ENCODE measurements at regions of chr7 and their contacts with region 1.

Region 1: GRCh38 chr7:77903597-77903996 is 105.0 kb downstream of the PHTF2 start:
- DNase-seq: no peak
- H3K4me3 ChIP-seq: no peak overlapping the region
- H3K27ac ChIP-seq: no peak overlapping the region
- H3K4me1 ChIP-seq: no peaks in the 10 kb centered on the region
- H3K27me3 ChIP-seq: no peaks in the 10 kb centered on the region
- CTCF ChIP-seq: no peak
- POLR2A ChIP-seq: no peak

Region 2: DNA sequence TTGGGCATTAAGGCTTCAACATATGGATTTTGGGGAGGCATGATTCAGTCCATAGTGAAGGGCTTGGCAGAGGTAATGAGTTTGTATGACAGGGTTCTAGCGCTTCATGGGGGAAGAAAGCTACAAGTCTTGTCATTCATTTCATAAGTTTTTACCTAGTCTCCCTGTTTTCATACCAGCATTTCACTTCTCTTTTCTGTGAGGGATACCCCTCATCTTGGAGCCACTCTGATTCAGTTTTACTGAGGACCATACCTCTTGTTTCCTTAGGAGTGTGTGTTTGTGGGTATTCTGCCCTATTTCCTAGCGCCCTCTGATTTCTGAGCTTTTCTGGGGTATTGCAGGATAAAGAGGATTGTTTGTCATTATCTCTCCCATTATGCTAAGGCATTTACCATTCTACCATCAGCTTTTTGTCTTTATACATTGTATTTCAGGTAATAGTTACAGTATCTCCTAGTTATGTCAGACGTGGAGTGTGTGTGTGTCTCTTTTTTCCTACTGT is 200.6 kb before region 1 on chr7:
- CTCF ChIA-PET with region 1: no interaction called
- POLR2A ChIA-PET with region 1: interaction called, 14 read pairs
- dilution Hi-C with region 1: no loop called
- intact Hi-C with region 1: no loop called
- DNase-seq: no peak
- H3K4me3 ChIP-seq: no peak overlapping the region
- H3K27ac ChIP-seq: no peak overlapping the region
- H3K4me1 ChIP-seq: peaks cover 14% of the 10 kb centered on the region
- H3K27me3 ChIP-seq: no peaks in the 10 kb centered on the region
- CTCF ChIP-seq: no peak
- POLR2A ChIP-seq: no peak

Region 3: DNA sequence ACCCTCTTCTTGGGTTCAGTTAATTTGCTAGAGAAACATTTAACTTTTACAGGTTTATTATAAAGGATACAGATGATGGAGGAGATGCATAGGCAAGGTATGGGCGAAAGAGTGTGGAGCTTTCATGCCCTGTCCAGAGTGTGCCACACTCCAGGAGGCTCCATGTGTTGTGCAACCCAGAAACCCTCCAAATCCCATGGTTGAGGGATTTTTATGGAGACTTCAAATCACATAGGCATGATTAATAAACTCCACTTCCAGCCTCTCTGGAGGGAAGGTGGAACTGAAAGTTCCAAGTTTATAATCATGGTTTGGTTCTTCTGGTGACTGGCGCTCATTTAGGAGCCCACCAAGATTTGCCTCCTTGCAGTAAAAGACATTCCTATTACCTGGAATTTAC is 54.8 kb after region 1 on chr7:
- CTCF ChIA-PET with region 1: no interaction called
- POLR2A ChIA-PET with region 1: no interaction called
- dilution Hi-C with region 1: no loop called
- intact Hi-C with region 1: no loop called
- DNase-seq: no peak
- H3K4me3 ChIP-seq: no peak overlapping the region
- H3K27ac ChIP-seq: no peak overlapping the region
- H3K4me1 ChIP-seq: no peaks in the 10 kb centered on the region
- H3K27me3 ChIP-seq: no peaks in the 10 kb centered on the region
- CTCF ChIP-seq: no peak
- POLR2A ChIP-seq: no peak

Region 4: DNA sequence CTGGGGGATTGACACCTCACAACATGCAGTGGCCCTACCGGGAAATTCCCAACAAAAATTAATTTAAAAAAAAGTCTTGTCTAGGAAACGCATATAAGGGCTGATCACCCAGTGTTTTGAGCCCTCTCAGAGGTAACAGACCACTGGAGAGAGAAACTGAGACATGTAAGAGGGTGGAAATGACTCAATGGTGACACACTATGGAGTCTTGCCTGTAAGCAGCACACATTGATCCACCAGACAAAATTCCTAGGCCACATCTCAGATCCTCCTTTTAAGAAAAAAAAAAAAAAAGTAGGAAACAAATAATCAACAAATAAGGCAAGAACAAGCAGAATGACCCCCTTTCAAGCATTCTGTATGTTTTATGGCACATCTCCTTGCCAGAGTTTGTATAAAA is 1253.7 kb after region 1 on chr7:
- CTCF ChIA-PET with region 1: no interaction called
- POLR2A ChIA-PET with region 1: no interaction called
- dilution Hi-C with region 1: no loop called
- intact Hi-C with region 1: no loop called
- DNase-seq: no peak
- H3K4me3 ChIP-seq: no peak overlapping the region
- H3K27ac ChIP-seq: no peak overlapping the region
- H3K4me1 ChIP-seq: no peaks in the 10 kb centered on the region
- H3K27me3 ChIP-seq: no peaks in the 10 kb centered on the region
- CTCF ChIP-seq: no peak
- POLR2A ChIP-seq: no peak

Measured in endothelial cell of umbilical vein (primary cell).